A549 (cell line): ENCODE measurements at regions of chr17 and their contacts with region 1.

Region 1: GRCh38 chr17:37047631-37048104 is 98.9 kb downstream of the AATF start:
- DNase-seq: peak; percentile 80 to 87
- ATAC-seq: peak; percentile 82 to 90
- H3K4me3 ChIP-seq: no peak overlapping the region
- H3K27ac ChIP-seq: no peak overlapping the region
- H3K4me1 ChIP-seq: peaks cover 4% of the 10 kb centered on the region; the same call in 2 of the 3 replicates
- CTCF ChIP-seq: peak; percentile 98
- EP300 ChIP-seq: no peak
- POLR2A ChIP-seq: no peak
- RAD21 ChIP-seq: peak; percentile 96 to 97

Region 2: GRCh38 chr17:36629252-36629847 is 418.3 kb before region 1 on chr17:
- CTCF ChIA-PET with region 1: interaction called, 263 read pairs
- POLR2A ChIA-PET with region 1: no interaction called
- DNase-seq: peak; percentile 81 to 90
- ATAC-seq: peak; percentile 87 to 95
- H3K4me3 ChIP-seq: no peak overlapping the region
- H3K27ac ChIP-seq: 0 out of 6 replicates have a peak overlapping the region, but pooled peaks of 1 of the 2 experiments have one; percentile 26
- H3K4me1 ChIP-seq: no peaks in the 10 kb centered on the region
- CTCF ChIP-seq: peak; percentile 96
- EP300 ChIP-seq: no peak
- POLR2A ChIP-seq: no peak
- RAD21 ChIP-seq: peak; percentile 98 to 99

Region 3: DNA sequence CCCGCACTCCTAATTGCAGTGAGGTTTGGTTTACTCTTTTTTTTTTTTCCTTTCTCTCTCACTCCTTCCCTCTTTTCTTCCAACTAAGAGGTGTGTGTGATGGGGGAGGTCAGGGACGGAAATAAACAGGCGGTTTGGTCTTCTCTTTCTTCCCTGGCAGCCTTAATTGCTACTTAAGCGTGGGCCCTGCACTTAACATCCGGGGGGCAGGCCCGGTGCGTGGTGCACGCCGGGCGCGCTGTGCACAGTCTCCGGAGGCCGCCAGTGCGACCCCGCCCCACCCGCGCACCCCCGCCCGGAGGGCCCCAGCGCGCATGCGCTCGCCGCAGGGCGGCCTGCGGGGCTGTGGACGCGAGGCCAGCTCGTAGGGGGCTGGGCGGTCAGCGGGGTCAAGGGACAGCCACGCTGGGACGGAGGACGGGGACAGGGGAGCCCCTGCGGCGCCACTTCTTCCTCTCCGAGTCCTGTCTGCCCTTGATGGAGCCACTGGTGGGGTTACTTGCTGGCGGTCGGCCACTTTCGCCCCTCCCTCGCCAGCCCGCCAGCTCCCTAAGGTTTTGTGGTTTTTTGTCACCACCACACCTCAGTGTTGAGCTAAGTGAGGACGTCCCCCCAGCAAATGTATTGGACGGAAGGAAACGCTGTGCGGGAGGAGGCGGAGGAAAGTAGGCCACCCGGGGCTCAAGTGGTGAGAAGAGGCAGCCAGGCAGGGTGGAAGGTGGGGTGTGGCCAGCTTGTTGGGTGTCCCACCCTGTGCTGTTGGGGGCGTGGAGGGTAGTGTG is 325.4 kb before region 1 on chr17:
- CTCF ChIA-PET with region 1: interaction called, 15 read pairs
- POLR2A ChIA-PET with region 1: no interaction called
- DNase-seq: no peak
- ATAC-seq: peak; percentile 20 to 68; a peak in 3 of 6 replicates
- H3K4me3 ChIP-seq: peak overlapping the region; percentile 33; the same call in 2 of the 3 replicates
- H3K27ac ChIP-seq: peak overlapping the region; percentile 45 to 75; a peak in 4 of 6 replicates
- H3K4me1 ChIP-seq: peaks cover 3% of the 10 kb centered on the region; the same call in 1 of the 3 replicates
- CTCF ChIP-seq: no peak
- EP300 ChIP-seq: no peak
- POLR2A ChIP-seq: peak; percentile 7; the same call in 1 of the 2 replicates
- RAD21 ChIP-seq: no peak

Region 4: DNA sequence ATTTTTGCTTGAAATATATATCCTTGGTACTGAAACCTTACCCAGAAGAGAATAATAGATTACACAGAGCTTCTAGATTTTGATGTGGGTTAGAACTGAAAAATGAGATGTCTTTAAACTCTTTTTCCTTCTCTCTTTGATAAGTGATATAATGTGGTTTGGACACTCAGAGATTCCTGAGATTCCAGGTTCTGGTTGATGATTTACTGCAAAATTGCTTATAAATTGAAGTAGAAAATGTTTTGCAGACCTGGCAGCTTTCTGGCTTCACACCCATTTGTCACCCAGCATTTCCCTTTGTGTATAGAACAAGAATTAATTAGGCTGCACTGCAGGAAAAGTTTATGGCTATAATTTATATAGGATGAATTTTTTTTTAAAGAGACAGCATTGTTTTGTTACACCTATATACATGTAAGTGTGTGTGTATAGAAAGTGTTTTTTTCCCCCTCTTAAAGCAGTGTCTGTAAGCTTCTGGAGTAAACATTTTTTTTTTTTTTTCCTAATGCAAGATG is 75.4 kb before region 1 on chr17:
- CTCF ChIA-PET with region 1: interaction called, 18 read pairs
- POLR2A ChIA-PET with region 1: no interaction called
- DNase-seq: no peak
- ATAC-seq: no peak
- H3K4me3 ChIP-seq: no peak overlapping the region
- H3K27ac ChIP-seq: no peak overlapping the region
- H3K4me1 ChIP-seq: peaks cover 19% of the 10 kb centered on the region
- CTCF ChIP-seq: no peak
- EP300 ChIP-seq: no peak
- POLR2A ChIP-seq: no peak
- RAD21 ChIP-seq: no peak

Region 5: GRCh38 chr17:37067555-37068111 is 20.0 kb after region 1 on chr17:
- CTCF ChIA-PET with region 1: interaction called, 118 read pairs
- POLR2A ChIA-PET with region 1: no interaction called
- DNase-seq: peak; percentile 86 to 91
- ATAC-seq: peak; percentile 94 to 95
- H3K4me3 ChIP-seq: no peak overlapping the region
- H3K27ac ChIP-seq: peak overlapping the region; percentile 61 to 68
- H3K4me1 ChIP-seq: peaks cover 15% of the 10 kb centered on the region
- CTCF ChIP-seq: no peak
- EP300 ChIP-seq: no peak
- POLR2A ChIP-seq: no peak
- RAD21 ChIP-seq: 0 out of 5 replicates have a peak, but pooled peaks of 1 of the 2 experiments have one; percentile 3

Region 6: GRCh38 chr17:37174205-37174604 is 126.5 kb after region 1 on chr17:
- CTCF ChIA-PET with region 1: interaction called, 21 read pairs
- POLR2A ChIA-PET with region 1: no interaction called
- DNase-seq: peak; percentile 48 to 70
- ATAC-seq: peak; percentile 95 to 97
- H3K4me3 ChIP-seq: no peak overlapping the region
- H3K27ac ChIP-seq: no peak overlapping the region
- H3K4me1 ChIP-seq: 0 out of 3 replicates have a peak, but pooled peaks cover under 1% of the 10 kb centered on the region
- CTCF ChIP-seq: peak; percentile 60
- EP300 ChIP-seq: no peak
- POLR2A ChIP-seq: no peak
- RAD21 ChIP-seq: peak; percentile 65 to 68

Region 7: DNA sequence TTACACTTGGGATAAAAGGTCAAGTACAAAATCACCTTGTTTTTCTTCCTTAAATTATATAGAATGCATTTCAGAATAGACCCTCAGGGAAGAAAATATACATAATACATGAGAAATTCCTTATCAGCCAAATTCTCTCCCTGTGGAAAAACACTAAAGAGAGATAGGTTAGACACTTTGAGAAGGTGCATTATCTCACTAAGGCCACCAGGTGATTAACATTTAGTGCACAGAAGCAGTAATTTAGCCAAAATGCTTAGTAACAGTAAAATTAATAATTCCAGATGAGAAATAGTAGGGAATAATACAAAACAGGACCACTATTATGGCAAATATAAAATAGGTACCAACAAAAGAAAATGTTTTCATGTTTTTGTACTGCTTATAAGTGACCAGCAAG is 142.8 kb after region 1 on chr17:
- CTCF ChIA-PET with region 1: no interaction called
- POLR2A ChIA-PET with region 1: no interaction called
- DNase-seq: peak in 1 of 2 experiments; percentile 28
- ATAC-seq: peak in 1 of 2 experiments; percentile 59; a peak in 3 of 6 replicates
- H3K4me3 ChIP-seq: no peak overlapping the region
- H3K27ac ChIP-seq: no peak overlapping the region
- H3K4me1 ChIP-seq: no peaks in the 10 kb centered on the region
- CTCF ChIP-seq: no peak
- EP300 ChIP-seq: no peak
- POLR2A ChIP-seq: no peak
- RAD21 ChIP-seq: no peak